ENCODE measurements at regions of chr5 and their contacts with region 1.

Region 1: GRCh38 chr5:58886315-58887207 is 303.7 kb downstream of the RAB3C start:
- DNase-seq: peak; percentile 57
- H3K4me3 Mint-ChIP-seq: peak overlapping the region; percentile 28
- H3K27ac Mint-ChIP-seq: peak overlapping the region; percentile 85
- H3K4me1 Mint-ChIP-seq: peaks cover 29% of the 10 kb centered on the region
- H3K27me3 Mint-ChIP-seq: peaks cover 11% of the 10 kb centered on the region

Region 2: GRCh38 chr5:58378613-58379390 is 507.8 kb before region 1 on chr5:
- intact Hi-C with region 1: no loop called
- DNase-seq: no peak
- H3K4me3 Mint-ChIP-seq: no peak overlapping the region
- H3K27ac Mint-ChIP-seq: no peak overlapping the region
- H3K4me1 Mint-ChIP-seq: no peaks in the 10 kb centered on the region
- H3K27me3 Mint-ChIP-seq: no peaks in the 10 kb centered on the region

Region 3: DNA sequence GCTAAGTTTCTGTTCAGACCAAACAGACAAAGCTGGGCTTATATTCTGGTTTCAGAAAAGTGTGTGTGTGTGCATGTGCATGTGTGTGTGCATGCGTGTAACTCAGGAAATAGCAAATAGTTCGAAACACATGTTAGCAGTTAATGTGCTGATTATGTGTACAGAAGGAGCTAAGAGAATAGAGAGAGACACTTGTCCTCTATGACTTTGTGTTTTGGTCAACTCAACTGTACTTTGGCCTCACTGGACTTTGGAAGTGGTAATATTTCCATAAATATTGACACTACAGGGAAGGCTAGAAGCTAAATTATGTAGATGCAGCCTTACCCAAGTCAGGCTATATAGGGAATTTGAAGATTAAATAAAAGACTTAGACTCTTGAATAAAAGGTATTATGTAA is 148.2 kb before region 1 on chr5:
- intact Hi-C with region 1: no loop called
- DNase-seq: no peak
- H3K4me3 Mint-ChIP-seq: no peak overlapping the region
- H3K27ac Mint-ChIP-seq: no peak overlapping the region
- H3K4me1 Mint-ChIP-seq: no peaks in the 10 kb centered on the region
- H3K27me3 Mint-ChIP-seq: no peaks in the 10 kb centered on the region

Region 4: GRCh38 chr5:58958701-58959100 is 72.1 kb after region 1 on chr5:
- intact Hi-C with region 1: no loop called
- DNase-seq: no peak
- H3K4me3 Mint-ChIP-seq: no peak overlapping the region
- H3K27ac Mint-ChIP-seq: no peak overlapping the region
- H3K4me1 Mint-ChIP-seq: no peaks in the 10 kb centered on the region
- H3K27me3 Mint-ChIP-seq: peaks cover 15% of the 10 kb centered on the region

Region 5: DNA sequence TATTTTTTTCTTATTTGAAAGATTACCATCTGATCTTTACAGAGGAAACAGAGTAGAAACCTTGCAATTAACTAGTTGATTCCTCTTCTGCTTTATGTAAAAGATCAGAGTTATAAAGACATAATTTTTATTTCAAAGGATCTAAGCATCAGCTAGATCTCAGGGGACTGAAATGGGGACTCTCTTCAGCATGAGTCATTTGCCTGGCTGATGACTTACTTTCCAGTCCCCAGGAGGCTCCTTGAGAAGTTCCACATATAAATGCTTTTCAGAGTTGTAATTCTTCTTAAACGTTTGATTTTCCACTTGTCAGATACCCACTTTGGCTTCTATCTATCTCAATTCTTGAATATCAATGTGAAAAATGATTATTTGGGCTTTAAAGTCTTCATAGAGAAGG is 85.7 kb after region 1 on chr5:
- intact Hi-C with region 1: loop called (anchors 2 kb)
- DNase-seq: no peak
- H3K4me3 Mint-ChIP-seq: no peak overlapping the region
- H3K27ac Mint-ChIP-seq: no peak overlapping the region
- H3K4me1 Mint-ChIP-seq: peaks cover 7% of the 10 kb centered on the region
- H3K27me3 Mint-ChIP-seq: no peaks in the 10 kb centered on the region

Region 6: DNA sequence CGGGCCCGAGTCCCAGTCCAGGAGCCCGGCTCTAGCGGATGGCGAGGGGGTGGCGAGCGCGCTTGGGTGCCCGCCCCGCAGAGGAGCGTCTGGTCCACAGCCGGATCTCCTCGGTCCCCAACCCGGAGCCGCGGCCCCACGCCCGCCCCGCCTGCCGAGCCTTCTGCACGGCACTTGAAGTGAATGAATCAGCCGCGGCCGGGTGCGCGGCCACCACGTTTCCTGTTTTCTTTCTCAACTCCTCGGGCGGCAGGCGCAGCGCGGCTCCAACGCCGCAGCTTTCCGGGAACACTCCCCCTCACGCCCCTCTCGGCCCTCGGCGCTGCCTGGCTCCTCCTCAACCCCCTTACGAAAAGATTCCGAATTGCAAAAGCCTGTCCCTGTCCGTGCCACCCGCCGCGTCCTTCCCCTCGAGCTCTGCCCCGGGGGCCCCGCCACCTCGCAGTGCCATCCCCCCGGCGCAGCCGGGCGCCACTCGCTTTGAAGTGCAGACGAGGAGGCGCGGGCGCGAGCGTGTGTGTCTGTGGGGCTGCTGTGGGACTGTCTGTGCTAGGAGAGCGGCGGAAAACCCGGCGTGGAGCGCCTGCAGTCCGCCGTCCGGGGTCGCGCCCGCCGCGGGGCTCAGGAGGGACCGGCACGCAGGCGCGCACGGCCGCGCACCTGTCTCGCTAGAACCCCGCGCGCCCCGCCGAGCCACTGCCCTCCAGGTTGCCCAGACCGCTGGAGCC is 152.9 kb after region 1 on chr5:
- intact Hi-C with region 1: loop called (anchors 1 kb)
- DNase-seq: peak; percentile 88
- H3K4me3 Mint-ChIP-seq: peak overlapping the region; percentile 88
- H3K27ac Mint-ChIP-seq: peak overlapping the region; percentile 95
- H3K4me1 Mint-ChIP-seq: peaks cover 50% of the 10 kb centered on the region
- H3K27me3 Mint-ChIP-seq: no peaks in the 10 kb centered on the region

Region 7: GRCh38 chr5:59126708-59127573 is 240.4 kb after region 1 on chr5:
- intact Hi-C with region 1: loop called (anchors 1 kb)
- DNase-seq: peak; percentile 34
- H3K4me3 Mint-ChIP-seq: no peak overlapping the region
- H3K27ac Mint-ChIP-seq: no peak overlapping the region
- H3K4me1 Mint-ChIP-seq: peaks cover 15% of the 10 kb centered on the region
- H3K27me3 Mint-ChIP-seq: no peaks in the 10 kb centered on the region

Region 8: DNA sequence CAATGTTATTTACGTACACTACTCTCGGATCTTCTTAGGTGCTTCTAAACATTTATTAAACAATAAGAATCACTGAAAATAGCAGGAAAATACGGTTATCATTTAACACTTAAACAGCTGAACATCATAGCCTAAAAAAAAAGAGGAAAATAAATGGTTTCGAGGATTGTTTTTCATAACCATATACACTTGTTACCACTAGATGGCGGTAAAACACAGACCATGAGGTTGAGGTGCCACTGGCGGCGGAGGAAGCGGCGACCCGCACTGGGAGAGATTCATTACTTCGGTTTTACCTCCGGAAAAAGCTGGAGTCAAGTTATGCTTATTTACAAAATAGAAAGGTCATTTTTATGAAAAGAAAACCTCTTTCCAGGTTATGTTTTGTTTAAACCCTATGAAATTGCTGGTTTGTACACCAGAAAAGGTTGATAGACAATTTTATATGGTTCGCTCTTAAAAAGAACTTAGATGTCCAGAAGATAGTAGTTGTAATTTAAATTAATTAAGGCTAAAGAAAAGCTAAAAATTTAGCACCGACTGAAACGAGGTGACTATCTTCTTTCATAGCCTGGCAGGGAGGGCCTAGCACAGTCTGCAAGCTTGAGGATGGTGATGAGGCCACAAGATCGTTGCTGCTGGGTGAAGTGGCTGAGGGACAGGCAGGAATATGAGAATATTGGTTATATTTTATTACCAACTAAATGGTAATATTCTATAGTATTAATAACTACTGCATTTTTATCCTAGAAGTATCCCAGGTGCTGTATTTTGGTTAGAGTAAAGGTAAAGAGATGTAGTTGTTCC is 302.1 kb after region 1 on chr5:
- intact Hi-C with region 1: loop called (anchors 1 kb)
- DNase-seq: peak; percentile 42
- H3K4me3 Mint-ChIP-seq: peak overlapping the region; percentile 31
- H3K27ac Mint-ChIP-seq: no peak overlapping the region
- H3K4me1 Mint-ChIP-seq: peaks cover 27% of the 10 kb centered on the region
- H3K27me3 Mint-ChIP-seq: peaks cover 18% of the 10 kb centered on the region

Region 9: GRCh38 chr5:59380350-59380951 is 493.9 kb after region 1 on chr5:
- intact Hi-C with region 1: loop called (anchors 2 kb)
- DNase-seq: no peak
- H3K4me3 Mint-ChIP-seq: no peak overlapping the region
- H3K27ac Mint-ChIP-seq: no peak overlapping the region
- H3K4me1 Mint-ChIP-seq: peaks cover 5% of the 10 kb centered on the region
- H3K27me3 Mint-ChIP-seq: peaks cover 5% of the 10 kb centered on the region